Posterior cingulate gyrus (tissue), 11 donors: ENCODE measurements at regions of chr19 and their contacts with region 1.

Region 1: DNA sequence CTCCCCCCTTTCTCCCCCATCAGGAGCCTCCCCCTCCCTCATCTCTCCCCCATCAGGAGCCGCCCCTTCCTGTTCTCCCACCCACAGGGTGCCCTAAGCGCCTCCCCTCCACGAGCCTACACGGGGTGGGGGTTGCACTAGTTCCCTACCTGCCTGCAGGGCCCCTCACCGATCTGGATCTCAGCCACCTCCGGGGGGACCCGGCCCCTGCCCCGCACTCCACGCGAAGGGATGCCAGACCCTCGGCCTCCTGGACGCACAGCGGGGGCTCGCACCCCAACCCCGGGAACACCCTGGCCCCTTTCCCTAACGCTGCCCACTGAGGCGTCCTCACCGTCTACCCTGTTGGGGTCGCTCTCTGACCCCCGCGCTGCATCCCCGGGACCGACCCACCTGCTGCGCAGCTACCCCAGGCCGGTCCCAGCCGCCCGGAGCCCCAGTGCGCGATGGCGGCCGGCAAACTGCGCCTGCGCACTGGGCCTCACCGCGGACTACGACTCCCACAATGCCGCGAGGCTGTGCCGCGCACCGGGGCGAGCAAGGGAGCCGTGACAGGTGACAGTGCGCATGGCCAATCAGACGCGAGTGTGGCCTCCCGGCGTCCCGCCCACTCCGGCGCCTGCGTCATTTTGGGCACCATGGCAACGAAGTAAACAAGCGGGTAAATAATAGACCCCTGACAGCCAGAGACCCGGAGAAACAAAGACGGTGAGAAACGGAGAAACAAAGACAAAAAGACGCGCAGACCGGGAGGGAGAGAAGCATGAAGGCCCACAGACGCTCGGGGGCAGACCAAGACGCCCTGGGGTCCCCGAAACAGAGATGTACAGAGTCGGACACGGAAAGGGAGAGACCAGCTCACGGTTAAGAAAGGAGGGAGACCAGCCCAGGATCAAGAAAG is at the start of gene ZSCAN18:
- DNase-seq: peak; percentile 96 to 100 (median 98)

Region 2: GRCh38 chr19:57927587-57927986 is 170.4 kb before region 1 on chr19:
- intact Hi-C with region 1: no loop called
- DNase-seq: no peak

Region 3: GRCh38 chr19:58033741-58034471 is 64.1 kb before region 1 on chr19 and contains the start of gene ZSCAN1:
- intact Hi-C with region 1: loop called (anchors 2 kb)
- DNase-seq: peak; percentile 92 to 100 (median 97)

Region 4: GRCh38 chr19:58059003-58059670 is 38.9 kb before region 1 on chr19 and contains the start of gene ZNF135:
- intact Hi-C with region 1: no loop called
- DNase-seq: peak; percentile 76 to 98 (median 83)